CD4-positive, alpha-beta T cell (primary cell): ENCODE measurements at regions of chr1 and their contacts with region 1.

Region 1: GRCh38 chr1:95622609-95623008 is 388.6 kb downstream of the RWDD3 start:
- DNase-seq: no peak
- ATAC-seq: no peak
- H3K4me3 ChIP-seq: no peak overlapping the region
- H3K4me3 Mint-ChIP-seq: no peak overlapping the region
- H3K27ac ChIP-seq: no peak overlapping the region
- H3K27ac Mint-ChIP-seq: no peak overlapping the region
- H3K4me1 ChIP-seq: no peaks in the 10 kb centered on the region
- H3K4me1 Mint-ChIP-seq: no peaks in the 10 kb centered on the region
- H3K27me3 ChIP-seq: no peaks in the 10 kb centered on the region
- H3K27me3 Mint-ChIP-seq: no peaks in the 10 kb centered on the region
- CTCF ChIP-seq: no peak

Region 2: DNA sequence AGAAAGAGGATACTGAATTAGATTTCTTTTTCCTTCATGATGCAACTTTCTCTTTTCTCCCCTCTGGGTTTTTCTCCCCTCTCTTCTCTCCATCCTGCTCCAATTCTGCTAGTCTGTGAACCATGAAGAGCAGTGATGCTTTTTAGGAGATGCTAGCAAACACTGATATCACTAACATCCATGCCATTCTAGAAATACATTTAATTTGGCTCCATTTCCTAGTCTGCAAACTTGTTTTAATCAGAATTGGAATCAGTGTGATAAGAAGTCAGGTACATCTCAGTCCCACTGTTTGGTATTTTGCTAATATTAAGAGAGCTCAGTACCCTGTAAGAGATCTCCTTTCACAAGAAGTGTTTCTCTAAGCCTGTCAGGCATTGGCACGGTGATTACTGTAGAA is 48.5 kb after region 1 on chr1:
- CTCF ChIA-PET with region 1: no interaction called
- POLR2A ChIA-PET with region 1: no interaction called
- intact Hi-C with region 1: loop called in 1 of 2 experiments (anchors 5 kb)
- DNase-seq: no peak
- ATAC-seq: no peak
- H3K4me3 ChIP-seq: no peak overlapping the region
- H3K4me3 Mint-ChIP-seq: no peak overlapping the region
- H3K27ac ChIP-seq: no peak overlapping the region
- H3K27ac Mint-ChIP-seq: no peak overlapping the region
- H3K4me1 ChIP-seq: no peaks in the 10 kb centered on the region
- H3K4me1 Mint-ChIP-seq: no peaks in the 10 kb centered on the region
- H3K27me3 ChIP-seq: no peaks in the 10 kb centered on the region
- H3K27me3 Mint-ChIP-seq: no peaks in the 10 kb centered on the region
- CTCF ChIP-seq: no peak